IMR-90 (cell line): ENCODE measurements at regions of chr7 and their contacts with region 1.

Region 1: DNA sequence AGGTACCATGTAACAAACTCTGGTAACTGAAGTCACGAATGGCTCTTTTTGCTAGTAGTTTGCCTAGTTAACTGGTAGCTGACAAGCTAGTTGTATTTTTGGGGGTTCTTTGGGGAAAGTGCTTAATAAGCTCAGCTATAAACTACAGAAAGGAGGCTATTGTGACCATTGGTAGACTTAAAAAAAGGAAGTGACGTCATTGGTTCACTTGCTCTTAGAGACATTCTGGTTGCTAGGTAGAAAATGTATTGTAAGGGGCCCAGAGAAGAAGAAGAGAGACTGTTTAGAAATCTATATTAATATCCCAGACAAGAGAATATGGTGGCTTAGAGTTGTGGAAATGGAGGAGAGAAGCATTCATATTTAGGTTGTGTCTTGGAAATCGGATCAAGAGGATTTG is 103.0 kb downstream of the NXPH1 start:
- DNase-seq: no peak
- ATAC-seq: no peak
- H3K4me3 ChIP-seq: no peak overlapping the region
- H3K27ac ChIP-seq: no peak overlapping the region
- H3K4me1 ChIP-seq: no peaks in the 10 kb centered on the region
- H3K27me3 ChIP-seq: no peaks in the 10 kb centered on the region
- CTCF ChIP-seq: no peak
- POLR2A ChIP-seq: no peak
- RAD21 ChIP-seq: no peak

Region 2: DNA sequence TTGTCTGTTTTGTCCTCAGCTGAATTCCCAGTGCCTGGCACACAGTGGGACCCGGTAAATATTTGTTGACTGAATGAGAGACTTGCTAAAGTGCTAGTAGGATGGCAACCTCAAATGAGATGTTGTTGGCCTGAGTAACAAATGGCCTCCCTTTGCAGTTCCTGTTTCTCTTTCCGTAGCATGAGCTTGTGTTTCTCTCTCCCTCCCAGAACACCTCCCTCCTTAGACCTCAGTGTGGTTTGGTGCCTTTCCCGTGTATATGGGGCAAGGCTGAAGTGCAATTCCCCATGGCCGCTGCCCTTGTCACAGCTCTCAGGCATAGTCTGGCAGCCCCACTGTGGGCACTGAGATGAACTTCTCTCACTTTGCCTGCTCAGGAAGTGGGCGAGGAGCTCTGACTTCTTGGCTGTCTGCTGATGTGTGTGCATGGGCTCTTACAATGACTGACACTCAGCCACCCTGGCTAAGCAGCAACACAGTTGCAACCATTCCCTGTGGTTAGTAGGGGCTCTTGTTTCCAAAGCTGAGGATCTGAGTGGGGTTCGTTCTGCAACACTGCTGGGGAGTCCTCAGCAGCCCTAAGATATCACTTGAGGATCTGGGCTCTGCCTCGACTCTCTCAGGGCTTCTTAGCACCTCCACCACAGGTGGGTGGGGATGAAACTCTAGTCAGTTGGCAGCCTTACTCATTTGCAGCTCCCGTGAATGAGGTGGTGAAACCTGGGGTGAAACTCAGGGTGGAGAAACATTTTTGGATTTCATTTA is 410.6 kb before region 1 on chr7:
- CTCF ChIA-PET with region 1: no interaction called
- POLR2A ChIA-PET with region 1: no interaction called
- dilution Hi-C with region 1: no loop called
- in situ Hi-C with region 1: no loop called
- intact Hi-C with region 1: no loop called
- DNase-seq: no peak
- ATAC-seq: no peak
- H3K4me3 ChIP-seq: no peak overlapping the region
- H3K27ac ChIP-seq: no peak overlapping the region
- H3K4me1 ChIP-seq: no peaks in the 10 kb centered on the region
- H3K27me3 ChIP-seq: peaks cover 2% of the 10 kb centered on the region
- CTCF ChIP-seq: no peak
- POLR2A ChIP-seq: no peak
- RAD21 ChIP-seq: no peak

Region 3: GRCh38 chr7:8176370-8177081 is 359.9 kb before region 1 on chr7:
- CTCF ChIA-PET with region 1: no interaction called
- POLR2A ChIA-PET with region 1: no interaction called
- dilution Hi-C with region 1: no loop called
- in situ Hi-C with region 1: no loop called
- intact Hi-C with region 1: no loop called
- DNase-seq: no peak
- ATAC-seq: no peak
- H3K4me3 ChIP-seq: no peak overlapping the region
- H3K27ac ChIP-seq: no peak overlapping the region
- H3K4me1 ChIP-seq: no peaks in the 10 kb centered on the region
- H3K27me3 ChIP-seq: peaks cover 1% of the 10 kb centered on the region; the same call in 1 of the 2 replicates
- CTCF ChIP-seq: no peak
- POLR2A ChIP-seq: no peak
- RAD21 ChIP-seq: no peak

Region 4: GRCh38 chr7:8702807-8703206 is 166.4 kb after region 1 on chr7:
- CTCF ChIA-PET with region 1: no interaction called
- POLR2A ChIA-PET with region 1: no interaction called
- dilution Hi-C with region 1: no loop called
- in situ Hi-C with region 1: no loop called
- intact Hi-C with region 1: loop called (anchors 10 kb)
- DNase-seq: no peak
- ATAC-seq: no peak
- H3K4me3 ChIP-seq: no peak overlapping the region
- H3K27ac ChIP-seq: no peak overlapping the region
- H3K4me1 ChIP-seq: no peaks in the 10 kb centered on the region
- H3K27me3 ChIP-seq: no peaks in the 10 kb centered on the region
- CTCF ChIP-seq: no peak
- POLR2A ChIP-seq: no peak
- RAD21 ChIP-seq: no peak